ENCODE measurements at regions of chr9 and their contacts with region 1.

Region 1: DNA sequence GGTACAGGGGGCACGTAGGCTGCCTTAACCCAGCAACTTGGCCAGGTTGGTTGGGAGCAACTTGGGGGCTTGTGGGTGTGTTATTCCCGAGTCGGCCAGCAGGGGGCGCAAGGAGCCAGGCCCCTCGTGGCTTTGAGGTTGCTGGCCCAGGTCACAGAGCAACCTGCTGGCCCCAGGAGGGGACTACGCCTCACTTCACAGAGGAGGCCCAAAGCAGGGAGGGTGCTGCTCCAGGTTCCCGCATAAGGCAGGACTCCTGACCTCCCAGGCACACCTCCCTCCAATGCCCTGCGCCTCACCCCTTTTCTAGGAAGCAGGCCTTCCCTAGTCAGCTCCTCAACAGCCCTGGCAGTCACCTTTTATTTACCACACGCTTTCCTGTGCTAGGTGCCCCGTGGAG is 18.1 kb downstream of the KYAT1 start:
- DNase-seq: peak; percentile 88
- H3K4me3 Mint-ChIP-seq: no peak overlapping the region
- H3K27ac Mint-ChIP-seq: no peak overlapping the region
- H3K4me1 Mint-ChIP-seq: peaks cover 13% of the 10 kb centered on the region
- H3K27me3 Mint-ChIP-seq: no peaks in the 10 kb centered on the region

Region 2: DNA sequence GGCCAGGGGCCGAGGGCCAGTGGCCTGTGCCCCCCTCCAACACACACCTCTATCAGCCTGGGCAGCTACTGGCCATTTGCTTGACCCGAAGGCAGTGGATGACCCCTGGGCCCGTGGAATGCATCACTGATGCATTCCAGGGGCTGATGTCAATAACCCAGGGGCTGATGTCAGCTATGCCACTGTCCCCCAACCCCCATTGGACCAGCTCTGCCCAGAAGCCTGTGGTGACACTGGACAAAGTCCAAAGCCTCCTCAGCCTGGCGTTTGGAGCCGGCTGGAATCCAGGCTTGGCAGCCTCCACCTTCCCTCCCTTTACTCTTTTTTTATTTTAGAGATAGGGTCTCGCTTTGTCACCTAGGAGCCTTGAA is 12.1 kb after region 1 on chr9:
- CTCF ChIA-PET with region 1: interaction called, 20 read pairs
- POLR2A ChIA-PET with region 1: no interaction called
- DNase-seq: no peak
- H3K4me3 Mint-ChIP-seq: no peak overlapping the region
- H3K27ac Mint-ChIP-seq: no peak overlapping the region
- H3K4me1 Mint-ChIP-seq: peaks cover 28% of the 10 kb centered on the region
- H3K27me3 Mint-ChIP-seq: no peaks in the 10 kb centered on the region

Region 3: GRCh38 chr9:128881901-128882681 is 18.4 kb after region 1 on chr9 and contains the starts of genes KYAT1 and LRRC8A:
- CTCF ChIA-PET with region 1: interaction called, 20 read pairs
- POLR2A ChIA-PET with region 1: interaction called, 4 read pairs
- DNase-seq: peak; percentile 99
- H3K4me3 Mint-ChIP-seq: peak within 1 kb of the TSS; percentile 93
- H3K27ac Mint-ChIP-seq: peak within 1 kb of the TSS; percentile 89
- H3K4me1 Mint-ChIP-seq: peaks cover 64% of the 10 kb centered on the region
- H3K27me3 Mint-ChIP-seq: no peaks in the 10 kb centered on the region
- total RNA-seq, gene KYAT1: 12.7 to 14.8 TPM
- total RNA-seq, gene LRRC8A: 37.1 to 38.1 TPM

Measured in activated CD4-positive, alpha-beta memory T cell treated with anti-CD3 and anti-CD28 coated beads, Interleukin-2, amount 10 ng/mL, durations not matched to agents 7 days and 5 days (primary cell).